Dendritic cell treated with granulocyte-macrophage colony-stimulating factor and Interleukin-4, amounts not matched to agents 40 ng/mL and 50 ng/mL, for 4 days (primary cell): ENCODE measurements at regions of chr6 and their contacts with region 1.

Region 1: GRCh38 chr6:18155150-18155863 is at the start of gene KDM1B:
- H3K4me3 Mint-ChIP-seq: peak within 1 kb of the TSS; percentile 99
- H3K27ac Mint-ChIP-seq: peak within 1 kb of the TSS; percentile 99
- H3K4me1 Mint-ChIP-seq: peaks cover 40% of the 10 kb centered on the region
- H3K27me3 Mint-ChIP-seq: no peaks in the 10 kb centered on the region

Region 2: GRCh38 chr6:17706580-17707370 is 448.5 kb before region 1 on chr6 and contains the start of gene NUP153:
- intact Hi-C with region 1: loop called (anchors 10 kb)
- H3K4me3 Mint-ChIP-seq: peak within 1 kb of the TSS; percentile 91
- H3K27ac Mint-ChIP-seq: peak within 1 kb of the TSS; percentile 93
- H3K4me1 Mint-ChIP-seq: peaks cover 36% of the 10 kb centered on the region
- H3K27me3 Mint-ChIP-seq: no peaks in the 10 kb centered on the region

Region 3: GRCh38 chr6:18264219-18264922 is 109.1 kb after region 1 on chr6 and contains the start of gene DEK:
- intact Hi-C with region 1: loop called (anchors 5 kb)
- H3K4me3 Mint-ChIP-seq: peak within 1 kb of the TSS; percentile 98
- H3K27ac Mint-ChIP-seq: peak within 1 kb of the TSS; percentile 96
- H3K4me1 Mint-ChIP-seq: peaks cover 40% of the 10 kb centered on the region
- H3K27me3 Mint-ChIP-seq: no peaks in the 10 kb centered on the region

Region 4: DNA sequence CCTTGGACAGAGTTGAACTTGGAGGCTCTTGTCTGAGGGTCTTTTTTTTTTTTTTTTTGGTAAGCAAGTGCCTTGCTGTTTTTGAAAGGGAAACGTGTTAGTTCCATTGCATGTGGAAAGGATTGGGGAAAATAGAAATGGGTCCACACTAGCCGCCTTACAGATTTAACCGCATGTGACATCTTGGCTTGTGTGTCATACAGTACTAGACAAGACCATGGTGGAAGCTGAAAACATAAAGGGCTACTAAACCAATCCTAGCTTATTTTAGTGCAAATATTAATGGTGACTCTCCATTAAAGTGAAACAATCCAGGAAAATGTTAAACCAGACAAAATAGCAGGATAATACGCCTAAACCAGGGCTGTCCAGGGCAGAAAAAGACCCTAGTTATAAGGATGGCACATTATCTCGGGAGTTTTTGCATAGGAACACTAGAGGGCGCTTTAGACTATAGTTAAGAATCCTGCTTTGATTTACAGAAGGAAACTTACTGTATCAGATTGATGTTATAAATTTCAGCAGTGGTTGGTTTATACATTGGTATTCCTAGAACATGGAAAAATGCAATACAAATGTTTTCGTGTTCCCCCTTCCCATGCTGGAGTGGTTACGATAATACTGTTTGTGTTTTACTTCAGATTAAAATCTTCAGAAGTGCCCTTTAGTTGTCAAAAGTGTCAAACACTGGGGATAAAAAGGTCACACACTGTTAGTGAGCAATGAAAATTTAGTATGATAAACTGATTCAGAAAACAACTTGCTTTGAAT is 168.8 kb after region 1 on chr6:
- intact Hi-C with region 1: loop called (anchors 10 kb)
- H3K4me3 Mint-ChIP-seq: no peak overlapping the region
- H3K27ac Mint-ChIP-seq: peak overlapping the region; percentile 63
- H3K4me1 Mint-ChIP-seq: peaks cover 51% of the 10 kb centered on the region
- H3K27me3 Mint-ChIP-seq: no peaks in the 10 kb centered on the region

Region 5: GRCh38 chr6:18439581-18439980 is 284.3 kb after region 1 on chr6:
- intact Hi-C with region 1: no loop called
- H3K4me3 Mint-ChIP-seq: no peak overlapping the region
- H3K27ac Mint-ChIP-seq: peak overlapping the region; percentile 46
- H3K4me1 Mint-ChIP-seq: peaks cover 52% of the 10 kb centered on the region
- H3K27me3 Mint-ChIP-seq: no peaks in the 10 kb centered on the region